ENCODE measurements at regions of chr9 and their contacts with region 1.

Region 1: DNA sequence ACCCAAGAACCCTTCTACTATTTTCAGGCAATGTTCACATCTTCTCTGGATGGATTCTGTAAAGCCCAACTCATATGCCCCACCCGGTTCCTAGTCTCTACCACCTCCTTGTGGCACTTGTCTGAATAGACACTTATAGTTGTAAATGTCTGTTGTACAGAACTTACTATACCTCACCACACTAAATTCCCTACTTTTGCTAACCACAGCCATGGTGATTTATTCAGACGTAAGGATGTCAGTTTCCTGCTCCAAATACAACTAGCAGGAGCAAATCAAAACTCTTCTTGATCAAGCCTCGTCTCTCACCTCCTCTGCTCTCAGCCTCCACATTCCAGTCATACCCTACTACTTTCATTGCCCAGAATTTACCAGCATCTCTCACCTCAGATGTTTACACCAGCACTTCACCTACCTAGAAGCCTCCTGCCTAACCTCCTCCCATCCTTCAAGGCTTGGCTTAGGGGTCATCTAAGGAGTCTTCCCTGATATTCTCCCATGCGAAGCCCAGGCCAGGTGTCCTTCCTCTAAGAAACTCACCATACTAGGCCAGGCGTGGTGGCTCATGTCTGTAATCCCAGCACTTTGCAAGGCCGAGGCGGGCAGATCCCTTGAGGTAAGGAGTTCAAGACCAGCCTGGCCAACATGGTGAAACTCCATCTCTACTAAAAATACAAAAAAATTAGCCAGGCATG is 75.5 kb downstream of the MAPKAP1 start:
- DNase-seq: peak; percentile 58
- ATAC-seq: no peak
- H3K4me3 ChIP-seq: no peak overlapping the region
- H3K4me3 Mint-ChIP-seq: peak overlapping the region; percentile 72
- H3K27ac ChIP-seq: peak overlapping the region in 1 of 2 donors; percentile 26
- H3K27ac Mint-ChIP-seq: peak overlapping the region; percentile 76
- H3K4me1 ChIP-seq: peaks cover 77 to 78% of the 10 kb centered on the region in 2 donors
- H3K4me1 Mint-ChIP-seq: peaks cover 78% of the 10 kb centered on the region
- H3K27me3 ChIP-seq: no peaks in the 10 kb centered on the region
- H3K27me3 Mint-ChIP-seq: no peaks in the 10 kb centered on the region
- CTCF ChIP-seq: peak; percentile 74

Region 2: DNA sequence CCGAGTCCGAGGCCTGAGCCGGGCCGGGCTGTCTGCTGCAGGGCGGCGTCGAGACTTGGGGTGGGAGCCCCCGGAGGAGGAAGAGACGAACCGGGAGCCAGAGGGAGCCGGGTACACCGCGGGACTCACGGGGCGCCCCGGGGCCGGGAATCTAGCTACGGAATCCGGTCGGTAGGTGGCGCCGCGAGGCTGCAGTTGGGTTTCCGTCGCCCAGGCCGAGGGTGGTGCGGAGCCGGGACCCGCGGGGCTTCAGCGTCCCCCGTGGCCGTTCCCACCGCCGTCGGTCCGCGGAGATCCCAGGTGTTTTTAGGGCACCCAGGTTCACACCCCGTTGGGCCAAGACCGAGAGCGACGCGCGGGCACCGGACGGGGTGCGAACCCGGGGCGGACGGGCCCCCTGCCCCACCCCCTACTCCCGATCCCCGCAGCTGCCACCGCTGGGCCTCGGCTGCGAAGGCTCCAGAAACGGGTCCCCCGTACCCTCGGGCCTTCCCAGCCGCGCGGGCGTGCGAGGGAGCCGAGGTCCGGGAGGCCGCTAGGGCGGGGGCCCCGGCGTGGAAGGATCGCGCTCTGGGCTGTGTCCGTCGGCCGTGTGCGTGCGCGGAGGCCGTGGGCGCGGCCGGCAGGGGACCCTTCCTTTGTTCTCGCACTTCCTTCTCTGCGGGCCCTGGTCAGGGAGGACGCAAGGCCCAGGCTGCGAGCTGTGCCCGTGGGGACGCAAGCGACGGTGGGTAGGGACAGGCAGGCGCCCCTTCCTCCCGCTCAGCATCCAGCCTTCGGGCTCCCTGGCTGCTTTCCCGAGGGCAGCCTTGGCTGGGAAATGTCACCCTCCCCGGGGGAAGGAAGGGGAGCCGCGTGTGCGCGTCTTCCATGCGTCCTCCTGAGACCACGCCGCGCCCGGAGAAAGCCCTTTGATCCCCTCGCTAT is 223.3 kb before region 1 on chr9:
- CTCF ChIA-PET with region 1: interaction called, 11 read pairs
- POLR2A ChIA-PET with region 1: no interaction called
- intact Hi-C with region 1: loop called (anchors 1 kb)
- DNase-seq: peak; percentile 87
- ATAC-seq: peak; percentile 81
- H3K4me3 ChIP-seq: peak overlapping the region; percentile 5 to 68 (median 51)
- H3K4me3 Mint-ChIP-seq: peak overlapping the region; percentile 80
- H3K27ac ChIP-seq: peak overlapping the region in 1 of 2 donors; percentile 15
- H3K27ac Mint-ChIP-seq: no peak overlapping the region
- H3K4me1 ChIP-seq: peaks cover 10 to 19% of the 10 kb centered on the region in 2 donors
- H3K4me1 Mint-ChIP-seq: peaks cover 16% of the 10 kb centered on the region
- H3K27me3 ChIP-seq: peaks cover 0 to 33% (median 9%) of the 10 kb centered on the region in 4 experiments
- H3K27me3 Mint-ChIP-seq: peaks cover 23% of the 10 kb centered on the region
- CTCF ChIP-seq: peak; percentile 93

Region 3: GRCh38 chr9:125558453-125559092 is 73.0 kb before region 1 on chr9:
- CTCF ChIA-PET with region 1: interaction called, 10 read pairs
- POLR2A ChIA-PET with region 1: no interaction called
- intact Hi-C with region 1: loop called (anchors 1 kb)
- DNase-seq: peak; percentile 80
- ATAC-seq: peak; percentile 81
- H3K4me3 ChIP-seq: no peak overlapping the region
- H3K4me3 Mint-ChIP-seq: no peak overlapping the region
- H3K27ac ChIP-seq: no peak overlapping the region
- H3K27ac Mint-ChIP-seq: peak overlapping the region; percentile 32
- H3K4me1 ChIP-seq: peaks cover 18 to 30% of the 10 kb centered on the region in 2 donors
- H3K4me1 Mint-ChIP-seq: peaks cover 22% of the 10 kb centered on the region
- H3K27me3 ChIP-seq: no peaks in the 10 kb centered on the region
- H3K27me3 Mint-ChIP-seq: no peaks in the 10 kb centered on the region
- CTCF ChIP-seq: peak; percentile 90

Region 4: GRCh38 chr9:125655691-125656410 is 24.3 kb after region 1 on chr9:
- CTCF ChIA-PET with region 1: no interaction called
- POLR2A ChIA-PET with region 1: no interaction called
- intact Hi-C with region 1: no loop called
- DNase-seq: no peak
- ATAC-seq: no peak
- H3K4me3 ChIP-seq: no peak overlapping the region
- H3K4me3 Mint-ChIP-seq: no peak overlapping the region
- H3K27ac ChIP-seq: no peak overlapping the region
- H3K27ac Mint-ChIP-seq: no peak overlapping the region
- H3K4me1 ChIP-seq: peaks cover 18 to 27% of the 10 kb centered on the region in 2 donors
- H3K4me1 Mint-ChIP-seq: peaks cover 33% of the 10 kb centered on the region
- H3K27me3 ChIP-seq: no peaks in the 10 kb centered on the region
- H3K27me3 Mint-ChIP-seq: no peaks in the 10 kb centered on the region
- CTCF ChIP-seq: no peak

Region 5: GRCh38 chr9:125674981-125675973 is 43.7 kb after region 1 on chr9:
- CTCF ChIA-PET with region 1: no interaction called
- POLR2A ChIA-PET with region 1: no interaction called
- intact Hi-C with region 1: loop called (anchors 5 kb)
- DNase-seq: no peak
- ATAC-seq: no peak
- H3K4me3 ChIP-seq: no peak overlapping the region
- H3K4me3 Mint-ChIP-seq: no peak overlapping the region
- H3K27ac ChIP-seq: no peak overlapping the region
- H3K27ac Mint-ChIP-seq: no peak overlapping the region
- H3K4me1 ChIP-seq: no peaks in the 10 kb centered on the region
- H3K4me1 Mint-ChIP-seq: peaks cover 4% of the 10 kb centered on the region
- H3K27me3 ChIP-seq: no peaks in the 10 kb centered on the region
- H3K27me3 Mint-ChIP-seq: no peaks in the 10 kb centered on the region
- CTCF ChIP-seq: no peak

Region 6: DNA sequence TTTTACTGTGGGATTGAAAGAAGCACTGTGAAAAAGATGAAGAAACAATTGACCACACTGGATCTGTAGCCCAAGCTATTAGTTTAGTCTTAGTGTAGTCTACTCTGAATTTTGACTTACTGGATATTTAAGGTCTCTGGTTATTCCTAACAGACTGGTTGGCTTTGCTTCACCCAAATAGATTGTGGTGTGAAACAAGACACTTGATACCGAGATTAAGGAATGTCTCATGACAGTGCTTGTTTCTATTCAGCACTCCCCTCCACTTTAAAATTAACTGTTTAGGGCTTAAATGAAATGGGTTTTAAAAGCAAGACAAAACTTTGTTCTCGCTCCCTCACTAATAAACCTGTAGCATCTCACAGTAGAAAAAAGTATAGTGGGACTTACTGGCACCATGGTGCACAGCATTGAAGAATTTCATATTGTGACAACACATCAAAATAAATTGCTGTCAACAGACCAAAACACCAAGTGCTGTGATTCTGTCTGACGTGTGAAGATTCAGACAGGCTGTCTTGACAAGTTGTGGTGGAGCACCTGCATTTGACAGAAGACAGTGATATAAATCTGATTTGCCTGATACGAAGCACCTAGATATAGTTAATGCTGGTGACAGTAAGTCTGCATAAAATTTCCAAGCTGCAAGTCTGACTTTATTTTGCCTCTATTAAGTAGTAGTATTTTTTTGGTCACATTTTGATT is 188.7 kb after region 1 on chr9:
- CTCF ChIA-PET with region 1: no interaction called
- POLR2A ChIA-PET with region 1: no interaction called
- intact Hi-C with region 1: loop called (anchors 5 kb)
- DNase-seq: peak; percentile 29
- ATAC-seq: no peak
- H3K4me3 ChIP-seq: peak overlapping the region in 1 of 5 experiments; percentile 57
- H3K4me3 Mint-ChIP-seq: peak overlapping the region; percentile 53
- H3K27ac ChIP-seq: peak overlapping the region in 1 of 2 donors; percentile 73
- H3K27ac Mint-ChIP-seq: peak overlapping the region; percentile 65
- H3K4me1 ChIP-seq: peaks cover 25 to 36% of the 10 kb centered on the region in 2 donors
- H3K4me1 Mint-ChIP-seq: peaks cover 35% of the 10 kb centered on the region
- H3K27me3 ChIP-seq: no peaks in the 10 kb centered on the region
- H3K27me3 Mint-ChIP-seq: no peaks in the 10 kb centered on the region
- CTCF ChIP-seq: no peak